K562 (cell line): ENCODE measurements at regions of chrX and their contacts with region 1.

Region 1: GRCh38 chrX:114332766-114333165 is 251.1 kb upstream of the HTR2C start:
- DNase-seq: no peak
- ATAC-seq: no peak
- H3K4me3 ChIP-seq: no peak overlapping the region
- H3K27ac ChIP-seq: no peak overlapping the region
- H3K4me1 ChIP-seq: no peaks in the 10 kb centered on the region
- H3K27me3 ChIP-seq: no peaks in the 10 kb centered on the region
- CTCF ChIP-seq: no peak
- EP300 ChIP-seq: no peak
- POLR2A ChIP-seq: no peak
- RAD21 ChIP-seq: no peak

Region 2: DNA sequence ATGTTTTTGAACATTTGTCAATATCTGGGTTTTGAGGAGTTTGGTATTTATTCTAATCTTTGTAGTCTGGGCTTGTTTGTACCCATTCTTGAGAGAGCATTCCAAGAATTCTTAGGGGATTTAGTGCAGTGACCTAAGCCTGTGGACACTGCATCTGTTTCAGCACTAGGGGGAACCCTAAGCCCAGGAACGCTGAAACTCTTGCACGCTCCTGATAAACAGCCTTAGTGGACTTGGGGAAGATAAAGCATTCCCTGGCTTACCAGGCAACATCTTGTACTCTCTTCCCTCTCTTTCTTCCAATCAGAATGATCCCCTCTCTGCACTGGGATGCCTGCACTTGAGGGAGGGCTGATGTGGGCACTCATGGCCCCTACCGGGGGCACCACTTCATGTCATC is 403.8 kb before region 1 on chrX:
- CTCF ChIA-PET with region 1: no interaction called
- POLR2A ChIA-PET with region 1: no interaction called
- in situ Hi-C with region 1: no loop called
- intact Hi-C with region 1: no loop called
- DNase-seq: peak; percentile 7 to 57 (median 21)
- ATAC-seq: peak; percentile 86
- H3K4me3 ChIP-seq: no peak overlapping the region
- H3K27ac ChIP-seq: no peak overlapping the region
- H3K4me1 ChIP-seq: no peaks in the 10 kb centered on the region
- H3K27me3 ChIP-seq: no peaks in the 10 kb centered on the region
- CTCF ChIP-seq: peak; percentile 55 to 60 (median 57)
- EP300 ChIP-seq: no peak
- POLR2A ChIP-seq: no peak
- RAD21 ChIP-seq: peak; percentile 22 to 76; a peak in 3 of 4 replicates

Region 3: GRCh38 chrX:114152130-114152529 is 180.6 kb before region 1 on chrX:
- CTCF ChIA-PET with region 1: no interaction called
- POLR2A ChIA-PET with region 1: no interaction called
- in situ Hi-C with region 1: loop called (anchors 10 kb)
- intact Hi-C with region 1: no loop called
- DNase-seq: peak; percentile 22 to 44 (median 26)
- ATAC-seq: peak; percentile 58; the same call in 2 of the 3 replicates
- H3K4me3 ChIP-seq: no peak overlapping the region
- H3K27ac ChIP-seq: no peak overlapping the region; the same call in 2 of the 3 replicates
- H3K4me1 ChIP-seq: no peaks in the 10 kb centered on the region
- H3K27me3 ChIP-seq: no peaks in the 10 kb centered on the region
- CTCF ChIP-seq: no peak
- EP300 ChIP-seq: 0 out of 2 replicates have a peak, but pooled peaks have one; percentile 31
- POLR2A ChIP-seq: no peak
- RAD21 ChIP-seq: no peak

Region 4: GRCh38 chrX:114619874-114620273 is 287.1 kb after region 1 on chrX:
- CTCF ChIA-PET with region 1: no interaction called
- POLR2A ChIA-PET with region 1: no interaction called
- in situ Hi-C with region 1: no loop called
- intact Hi-C with region 1: no loop called
- DNase-seq: peak; percentile 10 to 25 (median 17)
- ATAC-seq: 0 out of 3 replicates have a peak, but pooled peaks have one; percentile 49
- H3K4me3 ChIP-seq: no peak overlapping the region
- H3K27ac ChIP-seq: no peak overlapping the region
- H3K4me1 ChIP-seq: no peaks in the 10 kb centered on the region
- H3K27me3 ChIP-seq: no peaks in the 10 kb centered on the region
- CTCF ChIP-seq: peak in 2 of 3 experiments; percentile 39 to 43; a peak in 2 of 6 replicates
- EP300 ChIP-seq: no peak
- POLR2A ChIP-seq: no peak
- RAD21 ChIP-seq: no peak